ENCODE measurements at regions of chr1 and their contacts with region 1.

Region 1: DNA sequence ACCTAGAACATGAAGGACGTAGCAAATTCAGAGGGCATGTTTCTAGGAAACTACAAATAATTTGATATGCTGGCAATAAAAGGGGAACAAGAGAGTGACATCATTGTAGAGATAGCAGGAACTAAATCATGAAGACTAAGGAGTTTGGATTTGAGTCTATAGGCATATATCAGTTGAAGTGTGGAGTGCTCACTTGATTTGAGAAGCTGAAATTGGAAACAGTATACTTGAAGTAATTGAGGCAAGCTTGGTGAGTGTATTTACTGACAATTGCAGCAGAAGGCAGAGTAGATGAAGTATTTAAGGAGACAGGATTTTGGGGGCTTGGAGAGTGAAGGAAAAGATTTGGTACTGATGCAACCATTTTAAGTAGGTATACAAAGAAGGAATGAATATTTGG is 6.4 kb upstream of the TMCO2 start:
- DNase-seq: no peak
- ATAC-seq: peak; percentile 4
- H3K4me3 ChIP-seq: no peak overlapping the region
- H3K27ac ChIP-seq: peak overlapping the region; percentile 43
- H3K4me1 ChIP-seq: peaks cover 42% of the 10 kb centered on the region
- H3K27me3 ChIP-seq: no peaks in the 10 kb centered on the region
- CTCF ChIP-seq: no peak

Region 2: DNA sequence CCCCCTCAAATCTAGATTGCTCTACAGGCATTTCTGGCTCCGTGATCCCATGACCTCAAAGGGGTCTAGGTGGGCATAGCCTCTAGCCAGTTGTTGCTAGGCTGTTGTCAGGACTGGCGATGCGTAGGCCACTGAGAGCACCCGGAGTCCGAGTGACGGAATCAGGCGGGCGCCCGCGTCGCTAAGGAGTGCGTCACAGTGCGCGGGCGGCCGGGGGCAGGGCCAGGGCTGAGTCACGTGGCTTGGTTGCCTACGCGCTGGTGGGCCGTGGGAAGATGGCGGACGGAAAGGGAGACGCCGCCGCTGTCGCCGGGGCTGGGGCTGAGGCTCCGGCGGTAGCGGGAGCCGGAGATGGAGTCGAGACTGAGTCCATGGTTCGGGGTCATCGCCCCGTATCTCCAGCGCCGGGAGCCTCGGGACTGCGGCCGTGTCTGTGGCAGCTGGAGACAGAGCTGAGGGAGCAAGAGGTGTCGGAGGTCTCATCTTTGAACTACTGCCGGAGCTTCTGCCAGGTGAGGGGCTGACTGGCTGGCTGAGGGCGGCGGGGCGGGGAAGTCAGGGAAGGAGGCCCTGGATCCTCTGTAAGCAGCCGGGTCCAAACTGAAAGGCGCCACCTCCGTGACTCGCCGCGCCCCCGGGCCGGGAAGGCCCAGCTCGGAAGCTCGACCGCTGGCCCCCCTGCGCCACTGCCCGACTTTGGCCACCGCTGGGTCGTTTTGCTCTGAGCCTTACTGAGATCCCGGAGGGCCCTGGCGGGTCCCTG is 80.1 kb before region 1 on chr1 and contains the start of gene RLF:
- CTCF ChIA-PET with region 1: no interaction called
- POLR2A ChIA-PET with region 1: no interaction called
- intact Hi-C with region 1: loop called (anchors 10 kb)
- DNase-seq: peak; percentile 96
- ATAC-seq: peak; percentile 94
- H3K4me3 ChIP-seq: peak within 1 kb of the TSS; percentile 84
- H3K27ac ChIP-seq: peak within 1 kb of the TSS; percentile 69
- H3K4me1 ChIP-seq: peaks cover 30% of the 10 kb centered on the region
- H3K27me3 ChIP-seq: no peaks in the 10 kb centered on the region
- CTCF ChIP-seq: no peak
- total RNA-seq, gene RLF: 14.7 and 15.1 TPM in 2 replicates

Region 3: DNA sequence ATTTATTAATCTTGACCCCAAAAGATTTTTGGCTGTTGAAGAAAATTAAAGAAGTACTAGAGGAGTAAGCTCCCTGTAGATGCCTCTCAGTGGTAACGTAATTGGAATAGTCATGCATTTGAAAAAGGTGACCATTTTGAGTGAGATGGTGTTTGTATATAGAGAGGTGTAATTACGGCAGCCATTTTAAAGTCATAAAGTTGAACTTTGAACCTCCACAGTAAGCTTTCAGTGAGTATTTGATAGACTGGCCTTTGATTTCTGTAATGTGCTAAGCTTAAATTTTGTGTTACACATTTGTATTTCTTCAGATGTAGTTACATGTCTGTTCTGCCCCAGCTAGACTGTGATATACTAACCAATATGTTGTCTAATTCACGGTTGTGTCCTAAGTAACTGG is 15.2 kb before region 1 on chr1:
- CTCF ChIA-PET with region 1: no interaction called
- POLR2A ChIA-PET with region 1: no interaction called
- intact Hi-C with region 1: no loop called
- DNase-seq: no peak
- ATAC-seq: no peak
- H3K4me3 ChIP-seq: no peak overlapping the region
- H3K27ac ChIP-seq: no peak overlapping the region
- H3K4me1 ChIP-seq: no peaks in the 10 kb centered on the region
- H3K27me3 ChIP-seq: no peaks in the 10 kb centered on the region
- CTCF ChIP-seq: no peak

Region 4: DNA sequence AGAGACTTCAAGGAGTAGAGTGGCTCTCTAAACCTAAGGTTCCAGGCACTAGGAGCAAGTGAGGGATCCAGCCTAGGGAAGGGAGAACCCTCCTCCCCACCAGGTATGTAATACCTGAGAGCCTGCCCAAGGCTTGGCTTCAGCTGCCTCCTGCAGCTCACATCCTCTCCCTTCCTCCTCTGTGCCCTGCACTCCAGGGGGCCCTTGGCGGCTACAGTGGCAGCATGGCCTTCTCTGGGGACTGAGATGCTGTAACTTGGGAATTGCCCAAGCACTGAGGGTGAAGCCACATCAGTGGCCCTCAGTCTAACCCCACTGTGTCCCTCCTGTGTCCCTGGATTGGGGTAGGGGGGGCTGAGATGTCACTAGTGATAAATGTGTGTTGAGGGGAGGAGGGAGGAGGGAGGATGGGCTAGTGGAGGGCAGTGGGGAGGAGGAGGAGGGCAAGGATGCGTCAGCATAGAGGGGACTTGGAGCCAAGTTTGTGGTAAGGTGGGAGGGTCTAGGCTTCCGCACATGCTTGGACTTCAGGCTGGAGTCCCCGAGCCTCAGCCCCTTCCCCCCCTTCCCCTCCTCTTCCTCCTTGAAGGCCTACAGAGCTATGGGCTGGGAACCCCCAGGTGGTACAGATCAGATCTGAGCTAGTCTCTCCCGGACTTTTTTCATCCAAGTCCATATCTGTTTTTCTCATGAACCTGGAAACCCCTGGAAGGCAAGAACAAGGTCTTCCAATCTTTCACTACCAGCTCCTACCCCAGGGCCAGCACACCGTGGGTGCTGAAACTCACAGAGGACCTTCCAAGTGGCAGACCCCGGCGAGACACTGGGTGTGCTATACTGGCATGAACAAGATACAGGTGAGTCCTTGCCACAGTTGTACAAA is 58.2 kb after region 1 on chr1:
- CTCF ChIA-PET with region 1: no interaction called
- POLR2A ChIA-PET with region 1: no interaction called
- intact Hi-C with region 1: no loop called
- DNase-seq: no peak
- ATAC-seq: no peak; the same call in 1 of the 2 replicates
- H3K4me3 ChIP-seq: no peak overlapping the region
- H3K27ac ChIP-seq: no peak overlapping the region
- H3K4me1 ChIP-seq: no peaks in the 10 kb centered on the region
- H3K27me3 ChIP-seq: no peaks in the 10 kb centered on the region
- CTCF ChIP-seq: no peak